ENCODE measurements at regions of chr1 and their contacts with region 1.

Region 1: DNA sequence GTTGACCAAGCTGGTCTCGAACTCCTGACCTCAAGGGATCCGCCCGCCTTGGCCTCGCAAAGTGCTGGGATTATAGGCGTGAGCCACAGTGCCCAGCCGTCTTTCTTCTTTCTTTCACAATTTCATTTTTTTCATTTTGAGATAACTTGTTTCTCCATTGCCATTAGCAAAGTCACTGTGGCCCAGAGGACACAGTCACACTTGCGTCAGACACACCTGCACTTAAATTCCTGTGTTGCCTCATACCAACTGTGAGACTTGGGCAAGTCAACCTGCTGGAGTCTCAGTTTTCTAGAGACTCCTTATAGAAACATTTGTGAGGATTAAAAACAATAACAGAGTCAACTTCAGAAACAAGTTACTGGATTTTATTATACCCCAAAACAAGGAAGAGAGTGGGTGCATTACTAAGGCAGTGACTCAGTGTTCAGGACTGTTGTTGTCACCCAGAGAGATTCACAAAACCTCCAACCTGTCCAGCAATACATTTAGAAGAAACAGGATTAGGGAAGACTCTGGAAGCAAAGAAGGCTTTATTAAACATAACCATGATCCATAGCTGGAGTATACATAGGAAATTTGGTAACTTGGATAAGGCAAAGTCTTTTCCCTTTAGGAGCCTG is 2.6 kb downstream of the TEDDM1 start:
- DNase-seq: no peak
- ATAC-seq: no peak

Region 2: DNA sequence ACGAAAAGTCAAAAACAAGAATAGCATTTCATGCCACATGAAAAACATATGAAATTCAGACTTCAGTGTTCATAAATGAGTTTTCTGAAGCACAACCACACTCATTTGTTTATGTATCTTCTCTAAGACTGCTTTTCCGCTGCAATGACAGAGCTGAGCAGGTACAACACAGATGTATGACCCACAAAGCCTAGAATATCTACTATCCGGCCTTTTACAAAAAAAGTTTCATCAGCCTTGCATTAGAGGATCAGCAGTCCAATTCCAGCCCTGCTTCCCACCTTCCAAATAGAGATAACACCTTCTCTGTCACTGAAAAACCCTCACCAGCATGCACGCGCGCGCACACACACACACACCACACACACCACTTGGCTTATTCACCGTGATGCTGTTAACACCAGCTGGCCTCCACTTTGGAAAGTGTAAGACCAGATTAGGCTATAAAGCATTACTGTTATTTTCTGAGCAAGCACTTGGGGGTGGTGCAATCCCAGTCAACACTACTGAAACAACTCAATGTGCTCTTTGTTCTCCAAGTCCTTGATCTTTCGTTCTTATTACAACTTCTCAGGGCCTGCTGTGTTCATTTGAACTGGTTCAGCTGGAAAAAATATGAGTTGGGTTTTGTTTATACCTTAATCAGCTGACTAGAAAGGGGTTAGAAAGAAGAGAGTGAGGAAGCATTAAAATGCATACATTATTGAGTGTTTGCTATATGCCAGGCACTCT is 96.2 kb before region 1 on chr1:
- intact Hi-C with region 1: loop called in 1 of 2 experiments (anchors 5 kb)
- DNase-seq: peak; percentile 56
- ATAC-seq: peak; percentile 74 to 87

Measured in left cardiac atrium (tissue), 4 donors.